ENCODE measurements at regions of chr6 and their contacts with region 1.

Region 1: GRCh38 chr6:114398481-114398880 is 55.7 kb upstream of the HS3ST5 start:
- DNase-seq: no peak
- ATAC-seq: no peak
- H3K4me3 ChIP-seq: no peak overlapping the region
- H3K27ac ChIP-seq: no peak overlapping the region
- H3K4me1 ChIP-seq: no peaks in the 10 kb centered on the region
- H3K27me3 ChIP-seq: no peaks in the 10 kb centered on the region
- CTCF ChIP-seq: no peak

Region 2: DNA sequence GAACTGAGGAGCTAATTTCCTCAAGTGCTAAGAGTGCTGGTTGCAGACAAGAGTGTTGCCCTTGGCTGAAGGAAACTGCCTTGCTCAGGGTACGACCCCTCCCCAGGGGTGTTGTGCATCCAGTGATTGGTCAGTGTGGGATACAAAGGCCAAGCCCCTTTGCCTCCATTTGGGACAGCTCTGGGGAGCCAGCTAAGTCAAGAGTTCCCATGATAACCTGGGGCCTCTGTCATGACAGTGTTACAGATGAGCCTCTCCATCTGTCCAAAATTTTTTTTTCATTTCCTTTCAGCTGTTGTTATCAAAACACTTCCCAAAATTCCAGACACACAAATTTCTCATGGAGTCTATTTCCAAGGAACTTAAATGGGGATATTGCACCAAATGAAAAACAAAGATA is 149.0 kb before region 1 on chr6:
- CTCF ChIA-PET with region 1: no interaction called
- POLR2A ChIA-PET with region 1: no interaction called
- in situ Hi-C with region 1: no loop called
- intact Hi-C with region 1: no loop called
- DNase-seq: no peak
- ATAC-seq: no peak
- H3K4me3 ChIP-seq: no peak overlapping the region
- H3K27ac ChIP-seq: no peak overlapping the region
- H3K4me1 ChIP-seq: no peaks in the 10 kb centered on the region
- H3K27me3 ChIP-seq: no peaks in the 10 kb centered on the region
- CTCF ChIP-seq: no peak

Region 3: GRCh38 chr6:114281496-114281895 is 117.0 kb before region 1 on chr6:
- CTCF ChIA-PET with region 1: no interaction called
- POLR2A ChIA-PET with region 1: no interaction called
- in situ Hi-C with region 1: no loop called
- intact Hi-C with region 1: no loop called
- DNase-seq: no peak
- ATAC-seq: no peak
- H3K4me3 ChIP-seq: no peak overlapping the region
- H3K27ac ChIP-seq: no peak overlapping the region
- H3K4me1 ChIP-seq: no peaks in the 10 kb centered on the region
- H3K27me3 ChIP-seq: no peaks in the 10 kb centered on the region
- CTCF ChIP-seq: no peak

Region 4: DNA sequence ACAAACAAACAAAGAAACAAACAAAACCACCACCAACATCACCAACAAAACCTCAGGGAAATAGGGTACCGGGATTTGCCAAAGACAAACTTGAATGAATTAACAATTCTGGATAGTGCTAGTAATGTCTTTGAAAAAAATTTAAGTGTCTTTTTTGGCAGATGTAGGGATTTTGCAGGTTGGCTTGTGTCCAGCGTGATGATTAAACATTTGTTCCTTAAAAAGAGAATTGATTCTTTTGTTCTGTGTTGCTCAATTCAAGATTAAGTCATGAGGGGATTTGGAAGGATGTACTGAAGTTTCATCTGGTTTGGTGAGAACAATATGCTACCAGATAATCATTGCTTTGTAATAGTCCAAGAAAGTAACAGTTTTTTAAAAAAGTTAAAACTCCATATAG is 69.5 kb after region 1 on chr6:
- CTCF ChIA-PET with region 1: no interaction called
- POLR2A ChIA-PET with region 1: no interaction called
- in situ Hi-C with region 1: no loop called
- intact Hi-C with region 1: loop called (anchors 2 kb)
- DNase-seq: no peak
- ATAC-seq: no peak
- H3K4me3 ChIP-seq: no peak overlapping the region
- H3K27ac ChIP-seq: no peak overlapping the region
- H3K4me1 ChIP-seq: no peaks in the 10 kb centered on the region
- H3K27me3 ChIP-seq: no peaks in the 10 kb centered on the region
- CTCF ChIP-seq: no peak